ENCODE measurements at regions of chr7 and their contacts with region 1.

Region 1: DNA sequence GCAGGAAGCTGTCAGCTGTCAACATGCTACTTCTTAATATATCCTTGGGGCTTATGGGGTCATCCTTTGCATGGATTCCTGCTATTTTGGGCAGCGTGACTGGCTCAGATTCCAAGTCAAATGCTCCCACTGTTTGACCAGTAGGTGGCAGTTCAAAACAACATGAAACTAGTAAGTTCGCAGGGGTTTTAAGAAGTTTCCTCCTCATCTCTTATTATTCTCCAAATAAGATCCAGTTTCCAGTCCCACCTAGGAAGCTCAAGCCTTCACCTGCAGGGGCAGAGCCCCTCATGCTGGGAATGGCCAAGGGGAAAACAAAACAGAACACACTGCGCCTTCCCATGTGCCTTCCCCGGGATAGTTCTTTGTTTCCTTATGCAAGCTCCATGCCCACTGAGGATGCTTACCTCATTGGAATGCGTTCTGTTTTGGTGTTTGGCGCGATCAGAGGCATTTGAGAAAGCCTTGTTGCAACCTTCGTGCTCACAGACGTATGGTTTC is 259.8 kb downstream of the GLI3 start:
- DNase-seq: peak in 1 of 2 donors; percentile 86
- H3K4me3 ChIP-seq: no peak overlapping the region
- H3K27ac ChIP-seq: no peak overlapping the region
- H3K4me1 ChIP-seq: peaks cover 60% of the 10 kb centered on the region
- H3K27me3 ChIP-seq: no peaks in the 10 kb centered on the region
- CTCF ChIP-seq: peak; percentile 50 to 61 (median 50)
- POLR2A ChIP-seq: no peak

Region 2: DNA sequence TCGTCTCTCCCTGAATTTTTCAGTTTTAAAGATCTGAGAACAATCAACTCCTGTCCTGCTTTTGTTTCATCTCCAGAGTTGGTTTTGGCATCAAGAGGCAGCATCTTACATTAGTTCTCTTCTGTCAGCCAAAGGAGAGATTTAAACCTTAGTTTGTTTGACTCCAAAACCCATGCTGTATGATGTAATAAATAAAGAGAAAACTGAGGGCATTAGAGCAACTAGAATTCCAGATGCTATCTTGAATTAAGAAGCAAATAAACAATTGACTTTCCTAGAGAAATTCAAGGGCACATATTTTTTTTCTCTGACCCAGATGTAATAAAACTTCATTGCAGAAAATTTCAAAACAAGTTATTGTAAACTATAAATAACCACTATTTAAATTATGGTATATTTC is 328.7 kb before region 1 on chr7:
- intact Hi-C with region 1: no loop called
- DNase-seq: no peak
- H3K4me3 ChIP-seq: no peak overlapping the region
- H3K27ac ChIP-seq: no peak overlapping the region
- H3K4me1 ChIP-seq: no peaks in the 10 kb centered on the region
- H3K27me3 ChIP-seq: no peaks in the 10 kb centered on the region
- CTCF ChIP-seq: no peak
- POLR2A ChIP-seq: no peak

Region 3: GRCh38 chr7:42237162-42237821 is 260.1 kb after region 1 on chr7 and contains the start of gene GLI3:
- intact Hi-C with region 1: loop called (anchors 10 kb)
- DNase-seq: peak in 1 of 2 donors; percentile 94
- H3K4me3 ChIP-seq: peak within 1 kb of the TSS; percentile 88 to 93
- H3K27ac ChIP-seq: peak within 1 kb of the TSS; percentile 96
- H3K4me1 ChIP-seq: peaks cover 61% of the 10 kb centered on the region
- H3K27me3 ChIP-seq: no peaks in the 10 kb centered on the region
- CTCF ChIP-seq: peak in 1 of 3 experiments; percentile 16
- POLR2A ChIP-seq: peak in 1 of 2 donors; percentile 82
- total RNA-seq, gene GLI3: 24.6 TPM

Region 4: GRCh38 chr7:42843205-42843800 is 866.1 kb after region 1 on chr7:
- intact Hi-C with region 1: loop called (anchors 10 kb)
- DNase-seq: no peak
- H3K4me3 ChIP-seq: peak overlapping the region in 1 of 2 donors; percentile 11
- H3K27ac ChIP-seq: no peak overlapping the region
- H3K4me1 ChIP-seq: no peaks in the 10 kb centered on the region
- H3K27me3 ChIP-seq: no peaks in the 10 kb centered on the region
- CTCF ChIP-seq: peak in 2 of 3 experiments; percentile 47 to 49
- POLR2A ChIP-seq: no peak